Endothelial cell of umbilical vein (primary cell): ENCODE measurements at regions of chr18 and their contacts with region 1.

Region 1: GRCh38 chr18:23437357-23438045 is 15.6 kb upstream of the RIOK3 start:
- DNase-seq: peak; percentile 71
- H3K4me3 ChIP-seq: peak overlapping the region; percentile 25 to 98 (median 76)
- H3K27ac ChIP-seq: peak overlapping the region; percentile 1
- H3K4me1 ChIP-seq: peaks cover 4% of the 10 kb centered on the region
- H3K27me3 ChIP-seq: no peaks in the 10 kb centered on the region
- CTCF ChIP-seq: no peak
- POLR2A ChIP-seq: peak; percentile 67

Region 2: DNA sequence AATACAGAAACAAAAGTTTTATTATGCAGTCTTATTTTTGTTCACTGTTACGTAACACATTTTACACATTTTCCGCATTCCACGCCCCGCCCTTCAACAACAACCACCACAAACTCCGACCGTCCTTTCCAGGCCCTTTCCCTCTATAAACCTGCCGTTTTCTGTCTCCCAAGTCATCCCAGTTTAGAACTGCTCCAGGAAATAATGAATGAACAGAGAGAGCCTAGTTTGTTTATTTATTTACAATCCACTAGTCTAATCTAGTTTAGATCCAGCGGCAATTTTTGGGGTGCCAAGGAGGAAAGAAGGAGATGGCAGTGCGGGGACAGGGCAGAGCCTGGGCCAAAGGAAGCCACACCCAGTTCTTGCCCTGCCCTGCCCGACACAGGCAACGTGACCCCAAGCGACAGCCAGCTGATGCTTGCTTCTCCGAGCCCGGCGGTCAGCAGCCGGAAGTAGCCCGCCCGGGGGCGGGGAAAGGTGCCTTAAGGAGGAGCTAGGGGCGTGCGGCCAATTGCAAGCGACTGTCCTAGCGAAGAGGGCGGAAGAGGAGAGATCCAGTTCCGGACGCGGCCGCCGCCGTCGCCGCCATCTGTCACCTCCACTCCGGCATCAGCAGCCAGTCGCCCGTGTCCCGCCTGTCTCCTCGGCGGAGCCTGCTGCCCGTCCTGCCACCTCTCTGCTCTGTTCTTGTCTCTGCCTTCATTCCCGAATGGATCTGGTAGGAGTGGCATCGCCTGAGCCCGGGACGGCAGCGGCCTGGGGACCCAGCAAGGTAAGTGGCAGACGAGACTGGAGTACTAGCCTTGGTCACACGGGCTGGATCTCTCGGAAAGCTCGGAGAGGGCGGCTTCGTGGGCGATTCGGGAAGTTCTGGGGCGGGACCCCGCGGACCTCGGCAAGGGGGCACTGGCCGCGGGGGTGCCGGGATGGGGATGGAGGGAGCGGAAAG is 15.5 kb after region 1 on chr18 and contains the start of gene RIOK3:
- CTCF ChIA-PET with region 1: interaction called, 6 read pairs
- POLR2A ChIA-PET with region 1: interaction called, 5 read pairs
- dilution Hi-C with region 1: no loop called
- intact Hi-C with region 1: loop called (anchors 2 kb)
- DNase-seq: peak; percentile 94
- H3K4me3 ChIP-seq: peak within 1 kb of the TSS; percentile 61 to 80 (median 79)
- H3K27ac ChIP-seq: peak within 1 kb of the TSS; percentile 81
- H3K4me1 ChIP-seq: peaks cover 14% of the 10 kb centered on the region
- H3K27me3 ChIP-seq: no peaks in the 10 kb centered on the region
- CTCF ChIP-seq: no peak
- POLR2A ChIP-seq: peak; percentile 62
- total RNA-seq, gene RIOK3: 50.7 and 55.7 TPM in 2 replicates